Activated T-helper 1 cell treated with anti-CD3 and anti-CD28 coated beads, Interleukin-12 subunit alpha, Interleukin-12 subunit beta, Interleukin-2, Interleukin-4 antibody, amounts not matched to agents 30 ng/mL and 10 ng/mL and 1 ng/mL, durations not matched to agents 14 hours and 24 hours and 36 hours (primary cell): ENCODE measurements at regions of chr9 and their contacts with region 1.

Region 1: DNA sequence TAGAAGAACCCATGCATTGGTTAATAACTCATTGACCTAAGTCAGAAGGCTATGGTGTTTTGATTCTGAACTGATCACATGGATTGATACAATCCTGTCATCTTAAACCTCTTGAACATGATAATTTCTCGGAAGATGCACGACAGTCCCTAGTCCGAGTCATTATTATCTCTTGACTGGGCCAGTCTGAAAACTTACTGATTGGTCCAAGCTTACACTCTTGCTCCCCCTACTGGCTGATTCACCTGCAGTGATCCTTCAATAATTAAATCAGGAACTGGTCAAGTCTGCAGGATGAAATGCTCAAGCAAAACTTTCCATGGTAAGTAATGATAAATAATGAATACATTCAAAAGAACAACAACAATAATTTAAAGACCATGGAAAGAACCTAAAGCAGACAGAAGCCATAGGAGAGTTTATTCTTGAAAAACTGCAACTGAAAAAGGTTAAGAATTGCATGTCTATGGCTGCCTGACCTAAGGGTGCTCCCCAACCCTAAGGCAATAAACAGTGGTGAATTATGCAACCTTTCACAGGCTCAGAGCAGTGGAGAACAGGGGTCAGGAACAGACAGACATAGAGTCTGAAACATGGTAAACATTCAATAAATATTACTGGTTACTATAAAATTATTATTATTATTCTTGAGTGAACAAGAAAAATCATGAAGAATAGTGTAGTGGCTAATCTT is 79.3 kb downstream of the BRINP1 start:
- DNase-seq: no peak
- H3K4me3 Mint-ChIP-seq: no peak overlapping the region
- H3K27ac Mint-ChIP-seq: no peak overlapping the region
- H3K4me1 Mint-ChIP-seq: no peaks in the 10 kb centered on the region
- H3K27me3 Mint-ChIP-seq: no peaks in the 10 kb centered on the region

Region 2: GRCh38 chr9:118522093-118523028 is 767.5 kb before region 1 on chr9:
- intact Hi-C with region 1: loop called (anchors 5 kb)
- DNase-seq: no peak
- H3K4me3 Mint-ChIP-seq: no peak overlapping the region
- H3K27ac Mint-ChIP-seq: no peak overlapping the region
- H3K4me1 Mint-ChIP-seq: no peaks in the 10 kb centered on the region
- H3K27me3 Mint-ChIP-seq: no peaks in the 10 kb centered on the region

Region 3: DNA sequence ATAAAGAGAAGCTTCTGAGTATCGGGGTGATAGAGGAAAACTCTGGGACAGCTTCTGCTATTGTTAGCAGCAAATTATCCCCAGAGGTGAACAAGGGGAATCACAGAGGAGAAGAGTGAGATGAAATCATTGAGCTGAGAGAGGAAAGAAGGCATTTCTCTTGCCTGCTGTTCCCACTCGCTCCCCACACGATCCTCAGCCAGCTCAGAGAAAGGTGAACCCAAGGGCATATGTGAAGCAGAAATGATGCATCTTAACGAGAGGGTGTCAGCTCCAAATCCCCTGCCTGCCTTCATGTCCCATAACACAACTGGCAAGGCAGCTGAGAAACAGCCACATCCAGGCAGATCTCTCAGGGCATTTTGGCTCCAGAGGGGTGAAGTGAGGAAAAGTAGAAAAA is 32.3 kb before region 1 on chr9:
- intact Hi-C with region 1: no loop called
- DNase-seq: no peak
- H3K4me3 Mint-ChIP-seq: no peak overlapping the region
- H3K27ac Mint-ChIP-seq: no peak overlapping the region
- H3K4me1 Mint-ChIP-seq: no peaks in the 10 kb centered on the region
- H3K27me3 Mint-ChIP-seq: no peaks in the 10 kb centered on the region